ENCODE measurements at regions of chr4 and their contacts with region 1.

Region 1: GRCh38 chr4:140095694-140096482 is 58.1 kb downstream of the MAML3 start:
- DNase-seq: peak; percentile 91
- H3K4me3 Mint-ChIP-seq: peak overlapping the region; percentile 90
- H3K27ac Mint-ChIP-seq: peak overlapping the region; percentile 99
- H3K4me1 Mint-ChIP-seq: peaks cover 77% of the 10 kb centered on the region
- H3K27me3 Mint-ChIP-seq: no peaks in the 10 kb centered on the region

Region 2: GRCh38 chr4:139301113-139301820 is 794.6 kb before region 1 on chr4 and contains the start of gene NAA15:
- CTCF ChIA-PET with region 1: no interaction called
- intact Hi-C with region 1: loop called (anchors 5 kb)
- DNase-seq: peak; percentile 98
- H3K4me3 Mint-ChIP-seq: peak within 1 kb of the TSS; percentile 100
- H3K27ac Mint-ChIP-seq: peak within 1 kb of the TSS; percentile 98
- H3K4me1 Mint-ChIP-seq: peaks cover 56% of the 10 kb centered on the region
- H3K27me3 Mint-ChIP-seq: no peaks in the 10 kb centered on the region
- total RNA-seq, gene NAA15: 91.5 to 94.0 TPM

Region 3: GRCh38 chr4:139501927-139502899 is 593.7 kb before region 1 on chr4:
- CTCF ChIA-PET with region 1: no interaction called
- intact Hi-C with region 1: no loop called
- DNase-seq: no peak
- H3K4me3 Mint-ChIP-seq: no peak overlapping the region
- H3K27ac Mint-ChIP-seq: no peak overlapping the region
- H3K4me1 Mint-ChIP-seq: no peaks in the 10 kb centered on the region
- H3K27me3 Mint-ChIP-seq: peaks cover 2% of the 10 kb centered on the region

Region 4: DNA sequence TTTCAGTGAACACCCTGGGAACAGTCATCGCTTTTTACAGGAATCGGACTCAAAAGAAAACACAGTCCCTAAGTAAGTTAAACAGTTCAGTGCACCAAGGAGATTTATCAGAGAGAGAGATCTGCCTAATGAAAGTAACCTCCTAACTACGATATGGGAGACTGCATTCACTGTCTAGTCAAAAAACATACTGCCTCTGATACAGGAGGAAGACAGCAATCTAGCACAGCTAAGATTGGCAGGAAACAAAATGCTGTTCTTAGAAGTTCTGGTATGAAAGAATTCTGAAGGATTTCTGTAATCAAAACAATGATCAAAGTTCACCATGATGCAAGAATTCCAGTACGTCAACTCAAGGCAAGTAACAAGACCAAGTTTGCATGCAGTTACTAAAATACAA is 34.7 kb before region 1 on chr4:
- CTCF ChIA-PET with region 1: no interaction called
- intact Hi-C with region 1: loop called (anchors 5 kb)
- DNase-seq: no peak
- H3K4me3 Mint-ChIP-seq: peak overlapping the region; percentile 40
- H3K27ac Mint-ChIP-seq: no peak overlapping the region
- H3K4me1 Mint-ChIP-seq: peaks cover 25% of the 10 kb centered on the region
- H3K27me3 Mint-ChIP-seq: peaks cover 6% of the 10 kb centered on the region

Region 5: DNA sequence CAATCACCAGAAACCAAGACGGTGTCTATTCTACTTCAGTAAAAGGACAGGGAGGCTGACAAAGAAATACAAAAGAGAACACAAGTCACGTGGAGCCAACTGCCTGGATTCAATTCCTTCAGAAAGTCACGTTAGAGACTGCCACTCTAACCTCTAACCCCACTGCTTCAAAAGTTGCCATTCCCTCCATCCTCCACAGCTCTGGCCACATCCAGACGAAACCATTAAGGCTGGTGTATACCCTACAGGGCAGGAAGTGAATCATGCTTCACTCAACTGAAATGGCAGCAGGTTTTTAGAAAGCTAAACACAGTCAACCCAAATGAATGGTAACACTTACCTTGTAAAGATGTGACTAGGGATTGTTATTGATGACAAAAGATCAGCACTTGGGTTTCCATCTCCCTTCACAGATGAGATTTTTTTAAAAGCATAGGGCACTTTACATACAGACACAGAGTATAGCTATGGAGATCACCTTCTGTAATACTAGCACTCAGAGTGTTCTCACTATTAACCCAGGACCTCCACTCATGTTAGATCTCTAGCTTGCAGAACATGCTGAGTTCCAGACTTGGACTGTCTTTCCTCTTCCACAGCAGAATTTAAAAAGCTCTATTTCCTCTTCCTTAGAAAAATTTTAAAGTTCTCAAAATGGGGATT is 20.7 kb after region 1 on chr4:
- CTCF ChIA-PET with region 1: interaction called, 4 read pairs
- intact Hi-C with region 1: loop called (anchors 1 kb)
- DNase-seq: peak; percentile 66
- H3K4me3 Mint-ChIP-seq: no peak overlapping the region
- H3K27ac Mint-ChIP-seq: peak overlapping the region; percentile 70
- H3K4me1 Mint-ChIP-seq: peaks cover 24% of the 10 kb centered on the region
- H3K27me3 Mint-ChIP-seq: no peaks in the 10 kb centered on the region